PC-3 (cell line): ENCODE measurements at regions of chr6 and their contacts with region 1.

Region 1: DNA sequence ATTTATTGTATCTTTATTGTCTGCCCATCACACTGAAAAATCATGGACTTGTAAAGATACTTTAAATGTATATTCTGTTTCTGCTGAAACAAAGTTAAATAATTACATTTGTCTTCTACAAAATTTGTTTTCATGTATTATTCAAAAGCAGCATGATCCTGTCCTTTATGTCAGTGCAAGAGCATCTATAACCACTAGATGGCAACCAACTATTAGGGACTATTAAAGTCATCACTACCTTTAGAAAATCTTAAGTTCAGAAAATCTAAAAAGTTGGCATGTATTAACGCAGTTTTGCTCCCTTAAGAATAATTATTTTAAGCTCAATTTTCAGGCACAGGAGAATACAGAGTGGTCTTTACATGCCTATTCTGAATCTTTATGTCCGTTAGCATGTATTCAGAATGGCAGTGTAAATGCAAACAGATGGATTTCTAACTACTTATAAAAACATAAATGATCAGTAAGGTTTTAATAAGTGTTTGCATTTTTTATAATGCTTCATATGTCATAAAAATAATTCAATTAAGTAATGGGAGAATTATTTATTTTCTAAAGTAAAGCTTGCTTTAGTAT is 17.8 kb downstream of the TMEM30A start:
- DNase-seq: peak; percentile 67
- ATAC-seq: peak; percentile 60
- H3K4me3 ChIP-seq: no peak overlapping the region
- H3K27ac ChIP-seq: no peak overlapping the region
- H3K4me1 ChIP-seq: peaks cover 6% of the 10 kb centered on the region; the same call in 1 of the 2 replicates
- H3K27me3 ChIP-seq: no peaks in the 10 kb centered on the region
- CTCF ChIP-seq: peak; percentile 79

Region 2: DNA sequence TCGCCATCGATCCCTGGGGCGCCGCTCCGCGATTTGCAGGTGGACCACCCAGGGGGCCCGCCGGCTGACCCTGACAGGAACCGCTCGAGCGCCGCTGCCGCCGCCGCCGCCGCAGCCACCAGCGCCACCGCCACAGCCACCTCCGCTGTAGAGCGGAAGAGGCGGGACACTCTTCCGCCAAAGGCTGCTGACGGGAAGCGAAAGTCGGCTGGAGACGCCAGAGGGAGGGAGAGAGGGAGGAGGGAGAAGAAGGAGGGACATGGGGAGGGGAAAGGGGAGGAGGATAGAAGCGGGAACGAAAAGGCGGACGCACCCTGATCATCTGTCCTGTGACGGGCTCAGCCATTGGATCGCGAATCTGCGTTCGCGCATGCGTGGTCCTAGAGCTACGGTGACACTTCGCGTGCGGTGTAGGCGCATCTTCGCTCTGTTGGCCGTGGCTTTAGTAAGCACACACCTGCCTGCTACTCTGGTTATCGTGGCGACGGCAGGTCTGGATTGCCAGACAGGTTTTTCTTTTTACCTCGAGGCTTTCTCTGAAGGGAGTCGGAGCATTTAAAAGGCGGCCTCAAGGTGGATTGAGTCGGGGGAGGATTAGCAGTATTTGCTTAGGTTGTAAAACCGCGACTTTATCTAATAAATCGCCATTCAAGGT is 18.0 kb after region 1 on chr6 and contains the start of gene TMEM30A:
- CTCF ChIA-PET with region 1: no interaction called
- POLR2A ChIA-PET with region 1: no interaction called
- intact Hi-C with region 1: loop called (anchors 1 kb)
- DNase-seq: peak; percentile 96
- ATAC-seq: peak; percentile 87
- H3K4me3 ChIP-seq: peak within 1 kb of the TSS; percentile 84
- H3K27ac ChIP-seq: peak within 1 kb of the TSS; percentile 82
- H3K4me1 ChIP-seq: peaks cover 24% of the 10 kb centered on the region
- H3K27me3 ChIP-seq: no peaks in the 10 kb centered on the region
- CTCF ChIP-seq: no peak
- total RNA-seq, gene TMEM30A: 35.7 and 36.8 TPM in 2 replicates

Region 3: GRCh38 chr6:75296811-75297779 is 30.3 kb after region 1 on chr6:
- CTCF ChIA-PET with region 1: no interaction called
- POLR2A ChIA-PET with region 1: interaction called, 5 read pairs
- intact Hi-C with region 1: loop called (anchors 1 kb)
- DNase-seq: peak; percentile 61
- ATAC-seq: peak; percentile 77
- H3K4me3 ChIP-seq: no peak overlapping the region
- H3K27ac ChIP-seq: no peak overlapping the region
- H3K4me1 ChIP-seq: no peaks in the 10 kb centered on the region
- H3K27me3 ChIP-seq: no peaks in the 10 kb centered on the region
- CTCF ChIP-seq: peak; percentile 74

Region 4: DNA sequence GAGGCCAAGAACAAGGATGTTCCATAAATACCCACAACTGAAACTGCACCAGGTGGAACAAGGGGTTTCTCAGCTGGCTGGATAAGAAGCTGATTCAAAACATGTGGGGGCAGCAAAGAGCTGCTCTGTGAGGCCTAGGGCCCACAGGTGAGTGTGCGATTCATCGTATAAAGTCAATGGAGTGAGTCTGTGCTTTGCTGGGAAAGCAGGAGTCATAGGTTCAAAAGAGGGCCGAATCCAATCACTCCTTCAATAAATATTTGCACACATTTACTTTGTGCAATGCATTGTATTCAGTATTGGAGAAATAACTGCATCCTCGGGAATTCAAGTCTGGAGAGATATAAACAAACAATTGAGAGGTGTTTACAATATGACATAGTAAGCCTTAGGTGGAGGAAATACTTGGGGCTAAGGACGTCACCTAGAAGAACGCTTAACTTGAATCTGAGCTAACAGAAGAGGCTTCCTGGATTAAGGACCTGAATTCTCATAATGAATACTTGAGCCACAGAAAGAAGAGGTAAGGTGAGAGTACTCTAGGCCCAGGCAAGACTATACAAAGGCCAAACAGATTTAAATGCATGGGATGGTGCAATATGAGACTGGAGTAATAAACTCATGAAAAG is 101.5 kb after region 1 on chr6:
- CTCF ChIA-PET with region 1: no interaction called
- POLR2A ChIA-PET with region 1: no interaction called
- intact Hi-C with region 1: loop called (anchors 5 kb)
- DNase-seq: peak; percentile 77
- ATAC-seq: peak; percentile 85
- H3K4me3 ChIP-seq: no peak overlapping the region
- H3K27ac ChIP-seq: peak overlapping the region; percentile 30; the same call in 1 of the 2 replicates
- H3K4me1 ChIP-seq: 0 out of 2 replicates have a peak, but pooled peaks cover 9% of the 10 kb centered on the region
- H3K27me3 ChIP-seq: no peaks in the 10 kb centered on the region
- CTCF ChIP-seq: peak; percentile 76

Region 5: DNA sequence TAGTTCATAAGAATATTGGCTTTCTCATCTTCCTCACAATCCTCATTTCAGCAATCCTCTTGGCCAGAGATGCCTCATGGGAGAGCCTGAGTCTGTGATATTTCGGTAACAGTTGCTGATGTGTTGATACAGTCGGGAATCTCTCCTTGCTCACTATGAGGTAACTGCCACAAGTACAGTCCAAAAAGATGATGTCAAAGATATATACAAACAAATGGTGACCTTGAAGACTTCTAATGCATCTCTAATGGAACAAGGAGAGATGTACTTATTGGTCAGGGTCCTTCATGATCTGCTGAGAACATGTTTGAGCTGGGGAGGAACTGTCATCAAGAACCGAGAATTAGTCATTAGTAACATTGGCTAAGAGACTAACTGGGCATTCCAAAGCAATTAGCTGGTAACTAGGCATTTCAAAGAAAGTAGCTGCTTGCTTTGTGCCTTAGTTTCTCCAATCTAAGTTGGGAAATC is 170.7 kb after region 1 on chr6:
- CTCF ChIA-PET with region 1: no interaction called
- POLR2A ChIA-PET with region 1: no interaction called
- intact Hi-C with region 1: no loop called
- DNase-seq: peak; percentile 17
- ATAC-seq: no peak
- H3K4me3 ChIP-seq: no peak overlapping the region
- H3K27ac ChIP-seq: no peak overlapping the region
- H3K4me1 ChIP-seq: no peaks in the 10 kb centered on the region
- H3K27me3 ChIP-seq: no peaks in the 10 kb centered on the region
- CTCF ChIP-seq: no peak

Region 6: DNA sequence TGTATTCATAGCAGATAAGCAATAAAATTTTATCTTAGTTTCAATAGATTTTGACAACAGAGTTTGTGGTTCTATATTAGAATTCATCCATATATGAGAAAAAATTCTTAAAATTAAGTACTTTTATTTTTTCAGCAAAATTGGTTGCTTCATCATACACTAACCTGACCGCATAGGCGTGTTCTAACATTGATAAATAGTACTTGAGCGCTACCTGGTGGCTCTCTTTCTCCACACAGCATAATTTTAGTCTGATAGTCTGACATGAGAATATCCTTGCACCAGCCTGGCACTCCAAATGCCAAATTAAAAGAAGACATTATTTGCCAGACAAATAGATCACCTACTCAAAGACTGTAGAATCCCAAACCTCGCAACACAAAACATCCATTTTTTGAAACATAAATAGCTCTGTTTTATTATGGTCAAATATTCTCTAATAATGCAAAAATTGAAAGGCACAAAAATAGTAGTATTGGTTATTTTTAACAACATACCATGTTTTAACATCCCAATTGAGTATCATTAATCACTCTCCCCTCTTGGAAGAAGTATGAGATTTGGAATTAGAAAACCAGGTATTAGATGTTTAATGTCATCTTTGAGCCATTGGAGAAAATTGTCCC is 259.8 kb after region 1 on chr6:
- CTCF ChIA-PET with region 1: interaction called, 4 read pairs
- POLR2A ChIA-PET with region 1: no interaction called
- intact Hi-C with region 1: loop called (anchors 1 kb)
- DNase-seq: peak; percentile 82
- ATAC-seq: peak; percentile 68
- H3K4me3 ChIP-seq: no peak overlapping the region
- H3K27ac ChIP-seq: no peak overlapping the region
- H3K4me1 ChIP-seq: peaks cover 5% of the 10 kb centered on the region; the same call in 1 of the 2 replicates
- H3K27me3 ChIP-seq: no peaks in the 10 kb centered on the region
- CTCF ChIP-seq: peak; percentile 72